Activated CD8-positive, alpha-beta T cell treated with anti-CD3 and anti-CD28 coated beads for 36 hours (primary cell): ENCODE measurements at regions of chr4 and their contacts with region 1.

Region 1: GRCh38 chr4:76748649-76749048 is 149.3 kb downstream of the SOWAHB start:
- DNase-seq: peak; percentile 58
- ATAC-seq: no peak
- H3K4me3 Mint-ChIP-seq: no peak overlapping the region
- H3K27ac Mint-ChIP-seq: no peak overlapping the region
- H3K4me1 Mint-ChIP-seq: no peaks in the 10 kb centered on the region
- H3K27me3 Mint-ChIP-seq: peaks cover 21% of the 10 kb centered on the region
- CTCF ChIP-seq: no peak

Region 2: GRCh38 chr4:76388160-76388908 is 360.3 kb before region 1 on chr4:
- CTCF ChIA-PET with region 1: no interaction called
- POLR2A ChIA-PET with region 1: no interaction called
- intact Hi-C with region 1: no loop called
- DNase-seq: no peak
- ATAC-seq: no peak
- H3K4me3 Mint-ChIP-seq: no peak overlapping the region
- H3K27ac Mint-ChIP-seq: no peak overlapping the region
- H3K4me1 Mint-ChIP-seq: no peaks in the 10 kb centered on the region
- H3K27me3 Mint-ChIP-seq: peaks cover 27% of the 10 kb centered on the region
- CTCF ChIP-seq: no peak

Region 3: GRCh38 chr4:76515975-76516843 is 232.4 kb before region 1 on chr4:
- CTCF ChIA-PET with region 1: no interaction called
- POLR2A ChIA-PET with region 1: no interaction called
- intact Hi-C with region 1: loop called (anchors 5 kb)
- DNase-seq: no peak
- ATAC-seq: no peak
- H3K4me3 Mint-ChIP-seq: no peak overlapping the region
- H3K27ac Mint-ChIP-seq: no peak overlapping the region
- H3K4me1 Mint-ChIP-seq: no peaks in the 10 kb centered on the region
- H3K27me3 Mint-ChIP-seq: no peaks in the 10 kb centered on the region
- CTCF ChIP-seq: no peak